CD8-positive, alpha-beta T cell (primary cell): ENCODE measurements at regions of chr3 and their contacts with region 1.

Region 1: GRCh38 chr3:30467596-30468238 is 138.7 kb upstream of the TGFBR2 start:
- DNase-seq: no peak
- ATAC-seq: no peak
- H3K4me3 ChIP-seq: no peak overlapping the region
- H3K4me3 Mint-ChIP-seq: no peak overlapping the region
- H3K27ac ChIP-seq: no peak overlapping the region
- H3K27ac Mint-ChIP-seq: no peak overlapping the region
- H3K4me1 ChIP-seq: peaks cover 5% of the 10 kb centered on the region
- H3K4me1 Mint-ChIP-seq: peaks cover 12% of the 10 kb centered on the region
- H3K27me3 ChIP-seq: no peaks in the 10 kb centered on the region
- H3K27me3 Mint-ChIP-seq: no peaks in the 10 kb centered on the region
- CTCF ChIP-seq: no peak

Region 2: DNA sequence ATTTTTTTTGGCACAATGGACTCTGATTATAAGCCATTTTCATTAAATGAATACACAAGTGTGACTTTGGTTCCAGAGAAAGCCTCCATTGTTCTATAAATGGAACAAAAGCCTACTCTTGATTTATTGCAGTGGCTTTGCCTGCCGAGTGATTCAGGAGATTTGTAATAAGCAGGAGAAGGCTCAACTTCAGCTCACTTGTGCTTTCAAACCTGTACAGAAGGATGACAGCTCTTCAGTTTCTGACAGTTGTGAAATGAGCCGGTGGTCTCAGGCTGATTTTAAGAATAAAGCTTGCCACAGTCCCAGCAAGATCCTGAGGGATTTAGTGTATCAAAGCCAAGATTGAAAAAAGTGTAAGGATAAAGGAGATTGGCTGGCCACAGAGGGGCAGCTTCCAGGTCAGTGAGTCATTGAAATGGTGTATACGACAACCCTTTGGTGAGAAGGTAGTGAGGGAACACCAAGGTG is 300.1 kb before region 1 on chr3:
- CTCF ChIA-PET with region 1: no interaction called
- POLR2A ChIA-PET with region 1: no interaction called
- intact Hi-C with region 1: no loop called
- DNase-seq: no peak
- ATAC-seq: no peak
- H3K4me3 ChIP-seq: no peak overlapping the region
- H3K4me3 Mint-ChIP-seq: no peak overlapping the region
- H3K27ac ChIP-seq: no peak overlapping the region
- H3K27ac Mint-ChIP-seq: no peak overlapping the region
- H3K4me1 ChIP-seq: no peaks in the 10 kb centered on the region
- H3K4me1 Mint-ChIP-seq: no peaks in the 10 kb centered on the region
- H3K27me3 ChIP-seq: no peaks in the 10 kb centered on the region
- H3K27me3 Mint-ChIP-seq: no peaks in the 10 kb centered on the region
- CTCF ChIP-seq: no peak

Region 3: DNA sequence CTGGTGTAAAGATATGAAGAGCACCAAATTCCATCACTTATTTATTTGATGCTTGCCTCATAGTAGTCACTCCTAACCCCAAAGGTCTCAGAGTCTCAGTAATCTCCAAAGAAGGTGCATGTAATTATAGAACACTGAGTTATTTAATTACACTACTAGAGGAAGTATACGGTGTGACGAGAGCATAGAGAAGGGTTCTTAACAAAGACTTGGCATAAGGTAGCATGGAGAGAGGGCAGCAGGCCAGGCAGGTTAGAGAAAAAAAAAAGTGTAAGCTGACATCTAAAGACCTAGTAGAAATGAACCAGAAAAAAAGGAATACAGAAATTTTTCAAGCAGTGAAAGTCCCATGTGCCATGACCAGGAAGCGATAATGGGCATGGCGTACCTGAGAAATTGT is 74.6 kb before region 1 on chr3:
- CTCF ChIA-PET with region 1: no interaction called
- POLR2A ChIA-PET with region 1: no interaction called
- intact Hi-C with region 1: loop called in 1 of 2 experiments (anchors 2 kb)
- DNase-seq: no peak
- ATAC-seq: no peak
- H3K4me3 ChIP-seq: no peak overlapping the region
- H3K4me3 Mint-ChIP-seq: no peak overlapping the region
- H3K27ac ChIP-seq: no peak overlapping the region
- H3K27ac Mint-ChIP-seq: no peak overlapping the region
- H3K4me1 ChIP-seq: no peaks in the 10 kb centered on the region
- H3K4me1 Mint-ChIP-seq: no peaks in the 10 kb centered on the region
- H3K27me3 ChIP-seq: no peaks in the 10 kb centered on the region
- H3K27me3 Mint-ChIP-seq: no peaks in the 10 kb centered on the region
- CTCF ChIP-seq: no peak

Region 4: DNA sequence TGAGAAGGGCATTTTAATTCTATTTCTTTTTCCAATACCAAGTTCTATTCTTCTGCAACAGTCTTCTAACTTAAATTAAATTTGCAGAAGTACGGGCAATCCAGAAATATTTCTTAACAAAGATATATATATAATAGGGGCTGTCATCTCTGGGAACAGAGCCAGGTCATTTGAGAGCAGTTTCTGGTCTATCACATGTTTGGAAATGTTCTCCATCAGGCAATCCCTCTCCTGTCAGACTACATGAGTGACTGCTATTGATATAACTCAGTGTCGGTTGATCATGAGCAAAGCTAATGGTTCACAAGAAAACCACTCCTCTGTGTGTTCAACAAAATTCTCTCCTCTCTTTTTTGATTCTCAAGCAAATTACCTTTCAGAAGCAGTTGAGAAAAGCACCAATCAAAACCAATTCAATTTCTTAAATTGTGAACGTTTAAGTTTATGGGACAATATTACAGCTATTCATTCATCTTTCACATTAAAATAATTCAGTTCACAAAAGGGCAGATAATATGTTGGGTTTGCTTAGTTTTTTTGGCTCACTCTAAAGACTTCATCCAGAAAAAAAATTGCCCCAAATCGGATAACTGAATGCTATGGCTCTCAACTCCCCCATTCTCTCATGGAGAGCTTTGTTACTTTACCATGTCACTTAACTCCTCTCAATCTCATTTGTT is 14.2 kb before region 1 on chr3:
- CTCF ChIA-PET with region 1: no interaction called
- POLR2A ChIA-PET with region 1: no interaction called
- intact Hi-C with region 1: loop called in 1 of 2 experiments (anchors 2 kb)
- DNase-seq: no peak
- ATAC-seq: no peak
- H3K4me3 ChIP-seq: no peak overlapping the region
- H3K4me3 Mint-ChIP-seq: no peak overlapping the region
- H3K27ac ChIP-seq: no peak overlapping the region
- H3K27ac Mint-ChIP-seq: no peak overlapping the region
- H3K4me1 ChIP-seq: peaks cover 13% of the 10 kb centered on the region
- H3K4me1 Mint-ChIP-seq: peaks cover 22% of the 10 kb centered on the region
- H3K27me3 ChIP-seq: no peaks in the 10 kb centered on the region
- H3K27me3 Mint-ChIP-seq: no peaks in the 10 kb centered on the region
- CTCF ChIP-seq: no peak